ENCODE measurements at regions of chr6 and their contacts with region 1.

Region 1: DNA sequence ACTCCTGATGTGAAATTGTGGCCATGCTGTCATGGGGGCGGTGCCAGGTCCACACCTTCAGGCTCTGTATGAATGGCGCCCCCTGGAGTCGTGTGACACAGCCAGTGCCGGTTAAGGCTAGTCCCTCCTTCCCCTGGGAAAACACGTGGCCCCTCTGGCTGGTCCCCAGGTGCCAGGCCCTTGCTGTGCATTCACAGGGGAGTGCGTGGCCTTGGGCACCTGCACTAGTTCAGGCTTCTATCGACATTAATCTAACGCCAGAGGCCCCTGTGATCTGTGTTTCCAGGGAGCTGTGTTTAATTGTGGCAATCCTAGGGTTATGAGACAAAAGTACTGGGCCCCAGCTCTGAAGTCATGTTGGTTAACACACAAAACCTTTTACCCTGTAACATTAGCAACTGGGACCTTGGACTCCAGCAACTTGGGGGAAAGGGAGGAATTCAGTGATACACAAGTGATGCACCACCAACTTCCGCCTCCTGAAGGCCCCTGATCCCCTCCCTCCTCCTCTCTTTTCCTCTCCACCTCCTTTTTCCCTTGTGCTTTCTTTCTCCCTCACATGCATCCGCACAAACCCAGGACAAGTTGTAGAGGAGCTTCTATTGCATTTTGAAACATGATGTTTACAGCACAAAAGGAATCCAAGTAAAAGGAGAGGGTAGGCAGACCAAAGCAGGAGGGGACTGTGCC is 74.0 kb downstream of the SSR1 start:
- DNase-seq: peak; percentile 92
- ATAC-seq: peak; percentile 70 to 83

Region 2: DNA sequence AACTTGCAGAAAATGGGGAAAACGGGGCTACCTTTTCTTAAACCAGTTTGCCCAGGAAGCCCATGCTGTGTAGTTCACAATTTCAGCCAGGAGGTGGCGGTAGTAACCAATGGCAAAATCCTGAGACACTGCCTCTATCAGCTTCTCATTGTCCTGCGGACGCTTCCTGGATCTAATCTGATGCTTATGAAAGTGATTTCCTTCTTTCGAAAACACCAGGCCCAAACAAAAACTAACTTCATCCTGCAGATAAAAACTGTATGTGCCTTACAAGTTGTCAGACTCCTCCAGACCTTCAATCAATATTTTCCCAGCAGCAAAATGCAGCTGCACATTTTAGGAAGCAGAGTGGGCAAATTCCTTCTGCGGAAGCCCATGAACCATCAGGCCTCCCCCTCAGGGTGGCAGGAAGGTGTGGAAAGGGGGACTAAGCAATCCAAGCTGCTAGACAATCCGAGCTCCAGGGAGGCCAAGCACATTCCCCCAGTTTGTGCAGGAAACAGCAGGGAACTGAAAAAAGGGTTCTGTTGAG is 562.1 kb before region 1 on chr6:
- intact Hi-C with region 1: loop called in 1 of 2 experiments (anchors 2 kb)
- DNase-seq: peak; percentile 78
- ATAC-seq: peak; percentile 78 to 79

Region 3: GRCh38 chr6:6712258-6712999 is 526.6 kb before region 1 on chr6:
- intact Hi-C with region 1: loop called in 1 of 2 experiments (anchors 10 kb)
- DNase-seq: no peak
- ATAC-seq: peak; percentile 33 to 58

Region 4: GRCh38 chr6:6724539-6725467 is 514.2 kb before region 1 on chr6:
- intact Hi-C with region 1: loop called in 1 of 2 experiments (anchors 5 kb)
- DNase-seq: peak; percentile 81
- ATAC-seq: peak; percentile 81 to 92

Region 5: GRCh38 chr6:7112741-7113313 is 126.2 kb before region 1 on chr6:
- intact Hi-C with region 1: loop called in 1 of 2 experiments (anchors 10 kb)
- DNase-seq: peak; percentile 34
- ATAC-seq: no peak

Region 6: GRCh38 chr6:7505187-7505811 is 266.3 kb after region 1 on chr6:
- intact Hi-C with region 1: no loop called
- DNase-seq: peak; percentile 39
- ATAC-seq: peak; percentile 47 to 85